ENCODE measurements at regions of chr9 and their contacts with region 1.

Region 1: DNA sequence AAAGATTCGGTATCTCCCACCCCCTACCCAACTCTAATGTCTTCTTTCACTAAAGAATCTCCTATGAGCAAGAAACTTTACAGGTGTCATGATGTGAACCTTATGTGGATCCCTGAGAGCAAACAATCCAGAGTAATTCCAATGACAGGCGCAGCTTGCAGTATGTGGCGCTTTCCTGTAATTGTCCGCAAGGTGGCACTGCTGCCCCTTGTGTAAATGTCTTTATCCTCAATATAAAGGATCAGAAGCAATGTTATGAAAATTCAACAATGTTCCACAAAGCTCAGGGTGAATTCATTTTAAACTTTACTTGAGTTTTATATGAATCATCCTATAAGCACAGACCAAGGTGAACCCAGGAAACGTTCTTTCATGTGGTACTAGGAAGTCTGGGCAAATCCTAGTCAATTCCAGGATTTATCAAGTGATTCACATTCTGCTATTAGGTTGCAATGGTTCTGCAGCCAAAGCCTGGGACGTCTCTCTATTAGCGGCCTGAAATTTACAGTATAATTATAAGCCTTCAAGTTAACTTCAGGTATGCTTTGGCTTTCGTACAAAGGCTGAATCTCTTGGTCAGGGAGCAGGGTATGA is 113.7 kb downstream of the TRPM6 start:
- DNase-seq: peak; percentile 79
- H3K4me3 Mint-ChIP-seq: no peak overlapping the region
- H3K27ac Mint-ChIP-seq: no peak overlapping the region
- H3K4me1 Mint-ChIP-seq: peaks cover 14% of the 10 kb centered on the region
- H3K27me3 Mint-ChIP-seq: peaks cover 17% of the 10 kb centered on the region

Region 2: GRCh38 chr9:74322661-74323314 is 451.2 kb before region 1 on chr9:
- CTCF ChIA-PET with region 1: no interaction called
- POLR2A ChIA-PET with region 1: no interaction called
- intact Hi-C with region 1: no loop called
- DNase-seq: no peak
- H3K4me3 Mint-ChIP-seq: no peak overlapping the region
- H3K27ac Mint-ChIP-seq: no peak overlapping the region
- H3K4me1 Mint-ChIP-seq: no peaks in the 10 kb centered on the region
- H3K27me3 Mint-ChIP-seq: no peaks in the 10 kb centered on the region

Region 3: GRCh38 chr9:74887041-74887980 is 113.3 kb after region 1 on chr9 and contains the start of gene TRPM6:
- CTCF ChIA-PET with region 1: interaction called, 3 read pairs
- POLR2A ChIA-PET with region 1: no interaction called
- intact Hi-C with region 1: loop called (anchors 5 kb)
- DNase-seq: peak; percentile 45
- H3K4me3 Mint-ChIP-seq: peak within 1 kb of the TSS; percentile 74
- H3K27ac Mint-ChIP-seq: no peak within 1 kb of the TSS
- H3K4me1 Mint-ChIP-seq: peaks cover 5% of the 10 kb centered on the region
- H3K27me3 Mint-ChIP-seq: peaks cover 36% of the 10 kb centered on the region
- total RNA-seq, gene TRPM6: 0.02 to 0.10 TPM

Region 4: GRCh38 chr9:75001719-75002422 is 227.9 kb after region 1 on chr9:
- CTCF ChIA-PET with region 1: interaction called, 178 read pairs
- POLR2A ChIA-PET with region 1: no interaction called
- intact Hi-C with region 1: loop called (anchors 1 kb)
- DNase-seq: no peak
- H3K4me3 Mint-ChIP-seq: no peak overlapping the region
- H3K27ac Mint-ChIP-seq: no peak overlapping the region
- H3K4me1 Mint-ChIP-seq: peaks cover 5% of the 10 kb centered on the region
- H3K27me3 Mint-ChIP-seq: no peaks in the 10 kb centered on the region

Region 5: GRCh38 chr9:75071530-75072124 is 297.6 kb after region 1 on chr9:
- CTCF ChIA-PET with region 1: interaction called, 46 read pairs
- POLR2A ChIA-PET with region 1: no interaction called
- intact Hi-C with region 1: no loop called
- DNase-seq: peak; percentile 86
- H3K4me3 Mint-ChIP-seq: no peak overlapping the region
- H3K27ac Mint-ChIP-seq: peak overlapping the region; percentile 82
- H3K4me1 Mint-ChIP-seq: peaks cover 27% of the 10 kb centered on the region
- H3K27me3 Mint-ChIP-seq: no peaks in the 10 kb centered on the region

Region 6: DNA sequence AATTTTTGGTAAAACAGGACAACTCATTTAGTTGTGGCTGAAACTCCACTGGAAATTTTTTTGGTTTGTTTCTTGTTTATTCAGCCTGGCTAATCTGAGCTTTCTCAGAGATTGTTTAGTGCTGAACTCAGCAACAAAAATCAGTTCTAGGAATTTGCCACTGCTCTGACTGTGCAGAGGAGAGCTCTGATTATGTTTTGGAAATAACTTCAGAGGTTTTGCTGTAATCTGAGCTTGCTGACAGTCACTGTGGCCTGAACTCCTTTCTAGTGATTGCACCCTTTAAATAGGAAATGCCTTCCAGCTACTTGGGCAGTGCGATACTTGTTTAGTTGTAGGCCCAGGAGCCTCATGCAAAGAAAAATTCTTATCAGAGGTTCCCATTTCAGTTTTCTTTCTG is 374.6 kb after region 1 on chr9:
- CTCF ChIA-PET with region 1: interaction called, 3 read pairs
- POLR2A ChIA-PET with region 1: no interaction called
- intact Hi-C with region 1: loop called (anchors 5 kb)
- DNase-seq: peak; percentile 41
- H3K4me3 Mint-ChIP-seq: no peak overlapping the region
- H3K27ac Mint-ChIP-seq: peak overlapping the region; percentile 82
- H3K4me1 Mint-ChIP-seq: peaks cover 69% of the 10 kb centered on the region
- H3K27me3 Mint-ChIP-seq: no peaks in the 10 kb centered on the region

Region 7: GRCh38 chr9:75238311-75238978 is 464.5 kb after region 1 on chr9:
- CTCF ChIA-PET with region 1: interaction called, 7 read pairs
- POLR2A ChIA-PET with region 1: no interaction called
- intact Hi-C with region 1: loop called (anchors 1 kb)
- DNase-seq: peak; percentile 51
- H3K4me3 Mint-ChIP-seq: no peak overlapping the region
- H3K27ac Mint-ChIP-seq: no peak overlapping the region
- H3K4me1 Mint-ChIP-seq: peaks cover 3% of the 10 kb centered on the region
- H3K27me3 Mint-ChIP-seq: no peaks in the 10 kb centered on the region

Region 8: DNA sequence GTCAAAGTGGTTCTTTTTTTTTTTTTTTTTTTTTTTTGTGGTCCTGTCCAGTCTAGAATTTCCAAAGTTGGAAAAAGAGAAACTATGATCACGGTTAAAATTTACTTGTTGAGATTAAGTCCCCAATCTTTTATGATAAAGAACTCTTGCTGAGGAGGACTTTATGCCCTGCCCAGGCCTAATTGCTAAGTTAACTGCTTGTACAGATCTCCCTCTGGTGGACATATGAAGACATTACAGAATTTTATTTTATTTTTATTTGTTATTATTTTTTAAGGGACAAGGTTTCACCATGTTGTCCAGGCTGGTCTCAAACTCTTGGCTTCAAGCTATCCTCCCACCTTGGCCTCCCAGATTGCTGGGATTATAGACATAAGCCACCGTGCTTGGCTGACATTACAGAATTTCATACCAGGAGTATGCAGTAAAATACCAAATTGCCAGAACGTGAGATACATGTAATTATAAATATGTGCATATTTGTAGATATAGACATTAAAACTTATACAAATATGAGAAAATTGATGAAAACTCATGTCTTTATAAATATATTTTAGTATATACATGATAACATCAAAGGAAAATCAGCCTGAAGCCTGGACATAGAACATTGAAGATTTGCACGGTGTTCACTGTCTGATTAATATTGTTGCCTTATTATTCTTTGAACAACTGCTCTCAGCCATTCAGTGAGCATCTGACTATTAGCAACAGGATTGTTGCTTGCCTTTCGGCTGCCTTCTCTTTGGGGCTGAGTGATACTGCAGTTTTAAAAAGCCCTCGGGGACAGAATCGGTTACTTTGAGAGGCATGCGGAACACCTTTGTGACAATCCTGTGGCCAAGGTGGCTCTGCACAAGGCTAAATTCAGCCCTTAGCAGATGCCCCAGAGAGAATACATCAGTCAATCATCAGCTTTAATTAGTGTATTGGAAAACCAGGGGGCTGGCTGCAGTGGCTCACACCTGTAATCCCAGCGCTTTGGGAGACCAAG is 1529.3 kb after region 1 on chr9:
- CTCF ChIA-PET with region 1: no interaction called
- POLR2A ChIA-PET with region 1: no interaction called
- intact Hi-C with region 1: loop called (anchors 10 kb)
- DNase-seq: no peak
- H3K4me3 Mint-ChIP-seq: no peak overlapping the region
- H3K27ac Mint-ChIP-seq: no peak overlapping the region
- H3K4me1 Mint-ChIP-seq: no peaks in the 10 kb centered on the region
- H3K27me3 Mint-ChIP-seq: peaks cover 9% of the 10 kb centered on the region

Measured in activated CD4-positive, alpha-beta memory T cell treated with anti-CD3 and anti-CD28 coated beads for 36 hours (primary cell).